Calu3 (cell line): ENCODE measurements at regions of chr12 and their contacts with region 1.

Region 1: GRCh38 chr12:57063991-57064685 is 14.2 kb upstream of the MYO1A start:
- DNase-seq: no peak
- H3K4me3 Mint-ChIP-seq: no peak overlapping the region
- H3K27ac Mint-ChIP-seq: no peak overlapping the region
- H3K4me1 Mint-ChIP-seq: no peaks in the 10 kb centered on the region
- H3K27me3 Mint-ChIP-seq: no peaks in the 10 kb centered on the region
- CTCF ChIP-seq: no peak

Region 2: DNA sequence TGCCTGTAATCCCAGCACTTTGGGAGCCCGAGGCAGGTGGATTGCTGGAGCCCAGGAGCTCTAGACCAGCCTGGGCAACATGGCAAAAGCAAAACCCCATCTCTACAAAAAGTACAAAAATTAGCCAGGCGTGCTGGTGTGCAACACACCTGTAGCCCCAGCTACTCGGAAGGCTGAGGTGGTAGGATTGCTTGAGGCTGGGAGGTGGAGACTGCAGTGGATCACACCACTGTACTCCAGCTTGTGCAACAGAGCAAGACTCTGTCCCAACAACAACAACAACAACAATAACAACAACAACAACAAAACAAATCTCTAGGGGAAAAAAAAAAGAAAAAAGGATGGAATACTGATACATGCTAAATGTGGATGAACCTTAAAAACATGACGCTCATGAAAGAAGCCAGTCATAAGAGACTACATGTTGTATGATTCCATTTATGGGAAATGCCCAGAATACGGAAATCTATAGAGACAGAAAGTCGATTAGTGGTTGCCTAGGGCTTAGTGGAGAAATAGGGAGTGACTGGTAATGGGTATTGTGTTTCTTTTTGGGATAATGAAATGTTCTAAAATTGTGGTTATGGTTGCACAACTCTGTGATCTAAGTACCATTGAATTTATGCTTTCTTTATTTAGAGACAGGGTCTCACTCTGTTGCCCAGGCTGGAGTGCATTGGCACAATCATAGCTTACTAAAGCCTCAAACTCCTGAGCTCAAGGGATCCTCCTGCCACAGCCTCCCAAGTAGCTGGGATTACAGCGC is 534.7 kb before region 1 on chr12:
- CTCF ChIA-PET with region 1: no interaction called
- intact Hi-C with region 1: no loop called
- DNase-seq: no peak
- H3K4me3 Mint-ChIP-seq: peak overlapping the region; percentile 14
- H3K27ac Mint-ChIP-seq: peak overlapping the region; percentile 50
- H3K4me1 Mint-ChIP-seq: peaks cover 49% of the 10 kb centered on the region
- H3K27me3 Mint-ChIP-seq: no peaks in the 10 kb centered on the region
- CTCF ChIP-seq: no peak

Region 3: DNA sequence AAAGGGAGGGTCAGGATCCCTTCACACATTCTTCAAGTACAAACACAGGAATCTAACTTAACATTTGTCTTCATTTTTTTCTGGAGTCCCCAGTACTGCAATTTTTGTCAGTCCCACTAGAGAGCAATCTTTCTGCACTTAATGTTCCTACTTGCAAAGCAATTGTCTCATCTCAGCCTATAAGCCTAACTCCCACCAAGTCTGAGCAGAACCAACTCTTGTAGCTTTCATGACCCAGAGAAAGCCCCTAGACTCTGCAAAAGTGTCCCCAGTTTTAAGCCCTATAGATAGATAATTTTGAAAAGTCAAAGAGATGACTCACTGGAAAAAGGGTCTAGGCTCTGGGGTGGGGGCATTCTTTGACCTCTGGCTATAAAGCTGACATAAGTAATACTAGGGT is 56.0 kb before region 1 on chr12:
- CTCF ChIA-PET with region 1: no interaction called
- intact Hi-C with region 1: loop called (anchors 1 kb)
- DNase-seq: peak; percentile 32
- H3K4me3 Mint-ChIP-seq: no peak overlapping the region
- H3K27ac Mint-ChIP-seq: no peak overlapping the region
- H3K4me1 Mint-ChIP-seq: peaks cover 14% of the 10 kb centered on the region
- H3K27me3 Mint-ChIP-seq: peaks cover 38% of the 10 kb centered on the region
- CTCF ChIP-seq: no peak